Lower leg skin (tissue), 4 donors: ENCODE measurements at regions of chr10 and their contacts with region 1.

Region 1: GRCh38 chr10:34177445-34177844 is 637.7 kb downstream of the PARD3 start:
- DNase-seq: no peak
- H3K4me3 ChIP-seq: no peak overlapping the region
- CTCF ChIP-seq: no peak
- POLR2A ChIP-seq: no peak

Region 2: DNA sequence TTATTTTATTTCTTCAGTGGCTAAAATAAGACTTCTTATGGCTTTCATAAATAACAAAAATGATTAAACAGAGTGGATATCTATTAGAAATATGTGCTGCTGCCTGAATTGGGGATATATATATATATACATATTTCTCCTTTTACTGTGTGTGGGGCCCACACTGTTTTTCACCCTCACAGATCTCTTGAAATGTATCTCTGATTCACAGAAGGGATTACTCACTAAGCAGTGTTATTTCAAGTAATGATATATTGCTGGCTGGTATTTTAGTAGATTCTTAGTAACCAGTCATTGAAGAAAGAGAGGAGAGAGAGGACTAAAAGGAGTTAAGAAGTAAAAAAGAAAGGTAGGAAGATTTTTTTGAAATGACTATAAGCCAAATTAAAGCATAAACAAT is 534.4 kb before region 1 on chr10:
- intact Hi-C with region 1: no loop called
- DNase-seq: no peak
- H3K4me3 ChIP-seq: no peak overlapping the region
- CTCF ChIP-seq: no peak
- POLR2A ChIP-seq: no peak

Region 3: GRCh38 chr10:34153663-34154382 is 23.6 kb before region 1 on chr10:
- intact Hi-C with region 1: loop called (anchors 1 kb)
- DNase-seq: no peak
- H3K4me3 ChIP-seq: no peak overlapping the region
- CTCF ChIP-seq: no peak
- POLR2A ChIP-seq: no peak